Left lung (tissue), 14 donors: ENCODE measurements at regions of chr5 and their contacts with region 1.

Region 1: DNA sequence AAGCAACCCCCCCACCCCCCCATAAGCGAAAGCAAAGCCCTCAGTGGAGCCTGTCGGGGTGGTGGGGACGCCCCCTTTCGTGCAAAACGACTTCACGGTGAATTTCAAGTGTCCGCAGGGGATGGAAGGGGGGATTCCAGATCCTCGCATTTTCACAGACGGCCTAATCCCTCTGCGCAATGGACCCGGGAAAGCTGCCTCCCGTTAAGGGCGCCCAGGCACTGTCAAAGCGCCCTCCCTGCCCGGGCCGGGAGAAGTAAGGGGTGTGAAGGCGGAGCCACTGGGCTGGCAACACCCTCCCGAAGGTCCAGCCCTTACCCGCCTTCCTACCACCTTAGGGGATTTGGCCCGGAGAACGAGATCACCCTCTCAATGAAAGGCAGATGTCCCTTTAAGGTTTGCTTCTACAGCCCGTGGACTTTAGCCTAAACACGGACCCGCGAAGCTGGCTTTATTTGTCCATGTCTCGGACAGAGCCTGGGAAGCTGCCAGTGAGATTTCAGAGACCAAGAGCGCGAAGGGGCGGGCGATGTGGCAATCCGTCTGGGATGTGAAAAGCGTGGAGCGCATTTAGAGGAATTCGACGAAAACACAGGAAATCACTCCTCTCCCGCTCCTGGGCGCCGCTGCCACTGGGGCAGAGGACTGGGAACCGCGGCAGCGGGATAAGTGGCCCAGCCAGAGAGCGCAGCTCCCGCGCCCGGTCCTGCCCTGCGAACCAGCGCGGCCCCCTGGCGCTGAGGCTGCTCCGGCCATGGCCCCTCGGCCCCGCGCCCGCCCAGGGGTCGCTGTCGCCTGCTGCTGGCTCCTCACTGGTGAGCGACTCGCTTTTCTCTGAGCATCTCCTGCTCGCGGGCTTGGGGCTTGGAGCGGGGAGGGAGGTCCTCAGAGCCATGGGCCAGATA is at the starts of genes ITGA1 and PELO:
- DNase-seq: peak; percentile 76 to 91 (median 88)
- ATAC-seq: peak; percentile 96
- H3K4me3 ChIP-seq: peak within 1 kb of the TSS; percentile 58 to 60
- H3K27ac ChIP-seq: peak within 1 kb of the TSS; percentile 86 to 93
- H3K4me1 ChIP-seq: peaks cover 6 to 41% of the 10 kb centered on the region in 2 donors
- H3K27me3 ChIP-seq: peaks cover 0 to 7% of the 10 kb centered on the region in 2 donors
- CTCF ChIP-seq: no peak
- polyA plus RNA-seq, gene ITGA1: 67.8 to 93.5 (median 84.8) TPM
- polyA plus RNA-seq, gene PELO: 19.9 to 25.4 (median 23.2) TPM

Region 2: GRCh38 chr5:52041842-52042241 is 746.0 kb before region 1 on chr5:
- intact Hi-C with region 1: no loop called
- DNase-seq: no peak
- ATAC-seq: no peak
- H3K4me3 ChIP-seq: no peak overlapping the region
- H3K27ac ChIP-seq: no peak overlapping the region
- H3K4me1 ChIP-seq: no peaks in the 10 kb centered on the region
- H3K27me3 ChIP-seq: no peaks in the 10 kb centered on the region
- CTCF ChIP-seq: no peak

Region 3: DNA sequence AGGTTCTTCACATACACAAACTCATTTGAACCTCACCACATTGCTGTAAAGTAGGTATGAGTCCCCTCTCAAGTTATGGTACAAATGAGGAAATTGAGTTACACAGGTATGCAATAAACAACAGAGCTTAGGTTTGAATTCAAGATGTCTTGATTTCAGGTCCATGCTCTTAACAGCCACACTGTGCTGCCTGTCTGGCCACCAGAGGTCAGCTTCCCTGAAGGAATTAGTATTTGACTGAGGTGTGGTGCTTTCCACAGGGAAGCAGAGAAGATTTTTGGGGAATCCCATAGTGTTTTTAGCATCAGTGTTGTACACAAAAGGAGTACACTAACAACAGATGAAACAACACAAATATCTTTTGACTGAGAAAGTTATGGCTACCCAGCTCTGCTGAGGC is 94.6 kb before region 1 on chr5:
- intact Hi-C with region 1: loop called in 1 of 2 experiments (anchors 10 kb)
- DNase-seq: no peak
- ATAC-seq: peak; percentile 62
- H3K4me3 ChIP-seq: no peak overlapping the region
- H3K27ac ChIP-seq: no peak overlapping the region
- H3K4me1 ChIP-seq: peaks cover 13 to 16% of the 10 kb centered on the region in 2 donors
- H3K27me3 ChIP-seq: no peaks in the 10 kb centered on the region
- CTCF ChIP-seq: peak; percentile 38 to 40

Region 4: GRCh38 chr5:52915176-52915875 is 127.5 kb after region 1 on chr5:
- intact Hi-C with region 1: no loop called
- DNase-seq: peak in 2 of 4 donors; percentile 72 to 79
- ATAC-seq: peak; percentile 100
- H3K4me3 ChIP-seq: peak overlapping the region in 1 of 2 donors; percentile 15
- H3K27ac ChIP-seq: peak overlapping the region in 1 of 2 donors; percentile 34
- H3K4me1 ChIP-seq: peaks cover 2 to 5% of the 10 kb centered on the region in 2 donors
- H3K27me3 ChIP-seq: no peaks in the 10 kb centered on the region
- CTCF ChIP-seq: peak; percentile 58 to 77